ENCODE measurements at regions of chr6 and their contacts with region 1.

Region 1: GRCh38 chr6:151675746-151676416 is 131.6 kb upstream of the ESR1 start:
- DNase-seq: peak; percentile 27
- H3K4me3 Mint-ChIP-seq: no peak overlapping the region
- H3K27ac Mint-ChIP-seq: no peak overlapping the region
- H3K4me1 Mint-ChIP-seq: peaks cover 4% of the 10 kb centered on the region
- H3K27me3 Mint-ChIP-seq: peaks cover 2% of the 10 kb centered on the region

Region 2: GRCh38 chr6:151765444-151765886 is 89.6 kb after region 1 on chr6:
- intact Hi-C with region 1: loop called (anchors 5 kb)
- DNase-seq: no peak
- H3K4me3 Mint-ChIP-seq: no peak overlapping the region
- H3K27ac Mint-ChIP-seq: no peak overlapping the region
- H3K4me1 Mint-ChIP-seq: peaks cover 22% of the 10 kb centered on the region
- H3K27me3 Mint-ChIP-seq: peaks cover 13% of the 10 kb centered on the region

Region 3: GRCh38 chr6:152124429-152125074 is 448.7 kb after region 1 on chr6:
- intact Hi-C with region 1: loop called (anchors 1 kb)
- DNase-seq: no peak
- H3K4me3 Mint-ChIP-seq: no peak overlapping the region
- H3K27ac Mint-ChIP-seq: no peak overlapping the region
- H3K4me1 Mint-ChIP-seq: no peaks in the 10 kb centered on the region
- H3K27me3 Mint-ChIP-seq: no peaks in the 10 kb centered on the region

Measured in activated T-helper 2 cell treated with anti-CD3 and anti-CD28 coated beads, Interferon-gamma antibody, Interleukin-2, Interleukin-4, amounts not matched to agents 10 μg/mL and 5 μg/mL and 100 μg/mL, durations not matched to agents 14 hours and 24 hours and 36 hours (primary cell).